GM23248 (cell line): ENCODE measurements at regions of chr18 and their contacts with region 1.

Region 1: GRCh38 chr18:35756506-35757117 is 175.1 kb downstream of the GALNT1 start:
- DNase-seq: peak; percentile 77
- H3K4me3 ChIP-seq: no peak overlapping the region
- H3K27ac ChIP-seq: no peak overlapping the region
- H3K4me1 ChIP-seq: no peaks in the 10 kb centered on the region; the same call in 1 of the 2 replicates
- H3K27me3 ChIP-seq: peaks cover 21% of the 10 kb centered on the region

Region 2: DNA sequence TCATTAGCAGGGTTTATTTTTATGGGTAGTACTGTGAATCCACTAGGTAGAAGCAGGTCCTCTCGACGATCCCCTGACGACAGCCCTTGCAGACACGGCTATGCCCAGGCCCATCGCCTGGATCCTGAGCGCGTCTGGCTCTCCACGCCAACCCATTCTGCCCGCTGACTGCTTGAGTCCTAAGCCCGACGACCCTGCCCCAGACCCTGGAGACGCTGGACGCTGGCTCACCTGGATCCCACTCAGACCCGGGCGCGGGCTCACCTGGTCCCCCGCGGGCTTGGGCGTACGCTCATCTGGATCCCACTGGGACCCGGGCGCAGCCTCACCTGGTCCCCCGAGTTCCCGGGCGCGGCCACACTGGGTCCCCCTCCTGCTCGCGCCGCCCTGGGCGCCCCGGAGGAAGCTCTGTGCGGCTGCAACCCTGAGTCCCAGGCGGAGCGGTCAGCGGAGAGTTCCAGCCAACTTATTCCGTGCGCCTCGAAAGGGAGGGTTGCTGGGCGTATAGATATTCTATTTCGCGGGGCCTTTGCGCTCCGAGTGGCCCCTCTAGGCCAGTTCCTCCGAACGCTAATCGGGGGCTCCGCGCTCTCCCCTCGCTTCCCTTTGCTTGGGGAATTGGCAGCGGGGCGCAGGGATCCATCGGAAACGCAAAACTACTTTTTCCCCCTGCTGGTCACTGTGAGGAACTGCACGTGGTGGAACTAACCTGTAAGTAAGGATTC is 193.5 kb after region 1 on chr18:
- in situ Hi-C with region 1: loop called (anchors 10 kb)
- DNase-seq: peak; percentile 67
- H3K4me3 ChIP-seq: peak overlapping the region; percentile 85
- H3K27ac ChIP-seq: no peak overlapping the region
- H3K4me1 ChIP-seq: no peaks in the 10 kb centered on the region
- H3K27me3 ChIP-seq: no peaks in the 10 kb centered on the region

Region 3: GRCh38 chr18:36274083-36274715 is 517.6 kb after region 1 on chr18:
- in situ Hi-C with region 1: loop called (anchors 10 kb)
- DNase-seq: no peak
- H3K4me3 ChIP-seq: no peak overlapping the region
- H3K27ac ChIP-seq: no peak overlapping the region
- H3K4me1 ChIP-seq: no peaks in the 10 kb centered on the region
- H3K27me3 ChIP-seq: no peaks in the 10 kb centered on the region